Esophagus muscularis mucosa (tissue), 4 donors: ENCODE measurements at regions of chr14 and their contacts with region 1.

Region 1: DNA sequence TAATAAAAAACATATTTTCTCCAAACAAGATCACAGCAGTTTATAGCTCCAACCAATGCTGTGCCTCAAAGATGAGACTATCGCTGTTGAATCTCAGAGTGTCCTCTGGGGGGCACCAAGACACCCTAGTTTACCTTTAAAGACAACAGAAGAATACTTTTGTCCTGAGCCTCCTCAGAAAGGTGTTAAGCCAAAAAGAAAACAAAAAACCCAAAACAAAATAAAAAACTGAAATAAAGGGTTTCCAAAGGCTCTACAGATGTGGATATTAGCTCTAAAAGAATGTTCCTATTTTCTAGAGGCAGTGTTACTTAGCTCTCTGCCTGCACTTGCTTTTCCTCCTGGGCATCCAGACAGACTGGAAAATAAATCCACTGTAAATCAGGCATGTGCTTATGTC is 86.9 kb upstream of the TTC7B start:
- DNase-seq: no peak
- H3K4me3 ChIP-seq: no peak overlapping the region
- H3K27ac ChIP-seq: peak overlapping the region in 2 of 4 donors; percentile 37 to 53
- H3K4me1 ChIP-seq: peaks cover 0 to 8% (median 3%) of the 10 kb centered on the region in 4 donors
- H3K27me3 ChIP-seq: no peaks in the 10 kb centered on the region
- CTCF ChIP-seq: peak; percentile 67 to 84 (median 70)
- EP300 ChIP-seq: no peak
- POLR2A ChIP-seq: no peak

Region 2: GRCh38 chr14:91009501-91010152 is 106.5 kb after region 1 on chr14:
- intact Hi-C with region 1: no loop called
- DNase-seq: no peak
- H3K4me3 ChIP-seq: no peak overlapping the region
- H3K27ac ChIP-seq: peak overlapping the region; percentile 10 to 54 (median 46)
- H3K4me1 ChIP-seq: peaks cover 0 to 95% (median 81%) of the 10 kb centered on the region in 4 donors
- H3K27me3 ChIP-seq: no peaks in the 10 kb centered on the region
- CTCF ChIP-seq: no peak
- EP300 ChIP-seq: no peak
- POLR2A ChIP-seq: no peak

Region 3: GRCh38 chr14:91038438-91038837 is 135.3 kb after region 1 on chr14:
- intact Hi-C with region 1: no loop called
- DNase-seq: no peak
- H3K4me3 ChIP-seq: no peak overlapping the region
- H3K27ac ChIP-seq: peak overlapping the region in 1 of 4 donors; percentile 31
- H3K4me1 ChIP-seq: peaks cover 5 to 79% (median 52%) of the 10 kb centered on the region in 4 donors
- H3K27me3 ChIP-seq: no peaks in the 10 kb centered on the region
- CTCF ChIP-seq: no peak
- EP300 ChIP-seq: no peak
- POLR2A ChIP-seq: no peak

Region 4: GRCh38 chr14:91140672-91141071 is 237.6 kb after region 1 on chr14:
- intact Hi-C with region 1: loop called (anchors 10 kb)
- DNase-seq: no peak
- H3K4me3 ChIP-seq: no peak overlapping the region
- H3K27ac ChIP-seq: peak overlapping the region in 3 of 4 donors; percentile 13 to 60 (median 57)
- H3K4me1 ChIP-seq: peaks cover 57 to 87% (median 66%) of the 10 kb centered on the region in 4 donors
- H3K27me3 ChIP-seq: no peaks in the 10 kb centered on the region
- CTCF ChIP-seq: peak; percentile 45 to 63 (median 57)
- EP300 ChIP-seq: no peak
- POLR2A ChIP-seq: no peak